ENCODE measurements at regions of chr2 and their contacts with region 1.

Region 1: GRCh38 chr2:169109502-169110409 is 40.4 kb downstream of the DHRS9 start:
- DNase-seq: peak; percentile 82
- H3K4me3 Mint-ChIP-seq: no peak overlapping the region
- H3K27ac Mint-ChIP-seq: no peak overlapping the region
- H3K4me1 Mint-ChIP-seq: peaks cover 44% of the 10 kb centered on the region
- H3K27me3 Mint-ChIP-seq: no peaks in the 10 kb centered on the region

Region 2: DNA sequence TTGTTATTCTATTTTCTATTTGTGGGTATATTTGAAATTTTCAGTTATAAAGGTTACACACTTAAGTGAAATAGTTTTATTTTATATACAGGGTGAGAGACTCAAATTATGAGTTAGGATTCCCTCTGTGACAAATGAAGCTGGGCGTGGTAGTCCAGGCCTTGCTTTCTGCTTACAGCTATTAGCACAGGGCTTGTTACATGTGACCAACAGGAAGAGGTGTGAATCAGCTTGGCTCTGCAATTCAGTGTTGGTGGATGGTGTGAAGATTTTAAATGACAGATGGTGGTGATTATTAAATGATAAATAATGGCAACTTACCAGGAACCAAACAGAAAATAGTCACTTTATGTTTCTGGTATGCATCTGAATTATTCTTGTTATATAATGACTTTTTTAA is 371.7 kb before region 1 on chr2:
- CTCF ChIA-PET with region 1: no interaction called
- POLR2A ChIA-PET with region 1: no interaction called
- intact Hi-C with region 1: no loop called
- DNase-seq: no peak
- H3K4me3 Mint-ChIP-seq: no peak overlapping the region
- H3K27ac Mint-ChIP-seq: no peak overlapping the region
- H3K4me1 Mint-ChIP-seq: peaks cover 3% of the 10 kb centered on the region
- H3K27me3 Mint-ChIP-seq: no peaks in the 10 kb centered on the region

Region 3: DNA sequence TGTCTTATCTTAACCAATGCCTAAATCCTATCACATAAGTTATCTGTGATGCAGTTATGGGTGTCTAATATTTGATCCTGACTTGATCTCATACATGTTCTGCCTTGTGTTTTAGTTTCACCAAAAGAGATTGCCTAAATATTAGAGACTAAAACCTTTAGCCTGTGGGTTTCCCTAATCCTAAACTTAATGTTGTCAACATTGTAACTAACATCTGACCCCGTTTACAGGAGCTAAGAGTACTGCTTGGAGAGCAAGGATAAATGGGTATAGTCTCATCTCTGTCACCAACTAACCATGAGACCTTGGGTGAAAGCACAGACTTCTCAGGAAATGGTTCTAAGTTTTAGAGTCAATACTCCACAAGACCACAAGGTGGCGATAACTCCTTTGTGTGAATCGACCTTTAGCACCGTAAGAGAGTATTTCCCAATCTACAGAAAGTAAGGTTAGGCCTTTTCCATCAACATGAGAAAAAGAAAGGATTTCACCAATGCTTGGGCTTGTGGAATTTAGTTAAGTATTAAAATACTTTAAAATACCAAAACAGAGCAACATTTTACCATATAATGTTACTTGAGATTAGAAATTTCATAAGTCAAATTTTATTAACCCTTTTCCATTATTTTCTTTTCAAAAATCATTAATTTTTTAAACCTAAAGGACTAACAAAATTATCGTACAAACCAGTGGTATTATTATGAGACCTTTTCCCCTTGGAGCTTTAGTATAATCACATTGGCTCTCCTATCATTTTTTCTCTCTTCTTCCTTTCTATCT is 148.1 kb before region 1 on chr2:
- CTCF ChIA-PET with region 1: interaction called, 14 read pairs
- POLR2A ChIA-PET with region 1: no interaction called
- intact Hi-C with region 1: loop called (anchors 1 kb)
- DNase-seq: no peak
- H3K4me3 Mint-ChIP-seq: no peak overlapping the region
- H3K27ac Mint-ChIP-seq: no peak overlapping the region
- H3K4me1 Mint-ChIP-seq: peaks cover 36% of the 10 kb centered on the region
- H3K27me3 Mint-ChIP-seq: no peaks in the 10 kb centered on the region

Region 4: DNA sequence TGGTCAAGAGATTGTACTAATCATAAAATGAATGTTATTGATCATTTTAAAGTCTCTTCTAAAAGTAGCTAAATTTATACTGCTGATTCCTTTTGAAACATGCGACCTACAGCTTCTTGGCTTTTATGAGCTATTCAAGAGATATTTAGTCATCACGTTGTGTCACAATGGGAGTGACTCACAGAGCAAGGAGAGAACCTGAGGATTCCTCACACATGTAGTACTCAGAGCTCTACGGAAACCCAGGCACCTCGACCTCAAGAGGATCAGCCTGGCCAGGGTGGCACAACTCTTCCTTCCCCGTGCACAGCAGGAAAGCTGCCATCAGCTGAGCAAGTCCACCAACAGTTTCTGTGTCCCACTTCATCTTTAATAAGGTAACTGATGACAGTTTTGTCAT is 40.4 kb before region 1 on chr2 and contains the start of gene DHRS9:
- CTCF ChIA-PET with region 1: interaction called, 7 read pairs
- POLR2A ChIA-PET with region 1: no interaction called
- intact Hi-C with region 1: loop called (anchors 1 kb)
- DNase-seq: peak; percentile 68
- H3K4me3 Mint-ChIP-seq: peak within 1 kb of the TSS; percentile 42
- H3K27ac Mint-ChIP-seq: no peak within 1 kb of the TSS
- H3K4me1 Mint-ChIP-seq: peaks cover 36% of the 10 kb centered on the region
- H3K27me3 Mint-ChIP-seq: peaks cover 2% of the 10 kb centered on the region
- total RNA-seq, gene DHRS9: 4.9 to 5.4 TPM

Region 5: GRCh38 chr2:169131587-169132512 is 22.1 kb after region 1 on chr2:
- CTCF ChIA-PET with region 1: interaction called, 155 read pairs
- POLR2A ChIA-PET with region 1: interaction called, 4 read pairs
- intact Hi-C with region 1: loop called (anchors 1 kb)
- DNase-seq: no peak
- H3K4me3 Mint-ChIP-seq: no peak overlapping the region
- H3K27ac Mint-ChIP-seq: no peak overlapping the region
- H3K4me1 Mint-ChIP-seq: no peaks in the 10 kb centered on the region
- H3K27me3 Mint-ChIP-seq: no peaks in the 10 kb centered on the region

Region 6: GRCh38 chr2:169479257-169480078 is 369.7 kb after region 1 on chr2 and contains the start of gene BBS5:
- CTCF ChIA-PET with region 1: no interaction called
- POLR2A ChIA-PET with region 1: no interaction called
- intact Hi-C with region 1: loop called (anchors 10 kb)
- DNase-seq: peak; percentile 87
- H3K4me3 Mint-ChIP-seq: peak within 1 kb of the TSS; percentile 87
- H3K27ac Mint-ChIP-seq: no peak within 1 kb of the TSS
- H3K4me1 Mint-ChIP-seq: peaks cover 13% of the 10 kb centered on the region
- H3K27me3 Mint-ChIP-seq: no peaks in the 10 kb centered on the region
- total RNA-seq, gene BBS5: 2.4 to 3.4 TPM

Measured in activated CD4-positive, alpha-beta memory T cell treated with anti-CD3 and anti-CD28 coated beads for 36 hours (primary cell).